GM12878 (cell line): ENCODE measurements at regions of chr12 and their contacts with region 1.

Region 1: DNA sequence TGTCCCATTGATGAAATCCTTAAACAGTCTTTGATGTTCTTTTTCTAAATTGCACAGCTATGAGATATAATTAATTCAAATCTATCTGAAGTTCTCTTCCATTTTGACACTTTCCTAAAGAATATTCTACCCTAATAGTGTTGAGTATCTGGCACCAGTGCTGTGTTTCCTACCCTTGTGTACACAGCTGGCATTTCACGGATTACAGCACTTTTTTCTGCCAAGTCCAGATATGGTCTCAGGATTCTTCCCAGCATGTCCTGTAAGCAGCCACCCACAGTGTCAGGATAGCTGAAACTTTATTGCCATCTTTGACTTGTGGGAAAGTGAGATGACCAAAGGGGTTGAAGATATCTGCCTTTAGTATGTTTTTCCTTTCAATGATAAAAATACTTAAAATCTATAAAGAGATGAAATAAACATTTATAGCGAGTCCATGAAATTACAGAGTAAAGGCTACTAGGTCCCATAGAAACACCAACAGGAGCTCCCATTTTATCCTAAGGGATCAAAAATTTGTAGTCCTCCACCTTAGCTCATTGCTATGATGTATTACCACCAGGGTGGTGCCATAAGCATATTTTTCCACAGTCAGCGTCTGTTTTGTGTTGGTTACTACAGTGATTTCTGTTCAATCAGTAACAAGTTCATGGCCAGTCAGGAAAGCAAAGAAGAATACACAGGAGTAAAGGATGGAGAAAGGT is 96.7 kb downstream of the TRHDE start:
- DNase-seq: no peak
- ATAC-seq: no peak
- H3K4me3 ChIP-seq: no peak overlapping the region
- H3K27ac ChIP-seq: no peak overlapping the region
- H3K4me1 ChIP-seq: no peaks in the 10 kb centered on the region
- H3K27me3 ChIP-seq: no peaks in the 10 kb centered on the region
- CTCF ChIP-seq: no peak
- EP300 ChIP-seq: no peak
- POLR2A ChIP-seq: no peak
- RAD21 ChIP-seq: no peak

Region 2: DNA sequence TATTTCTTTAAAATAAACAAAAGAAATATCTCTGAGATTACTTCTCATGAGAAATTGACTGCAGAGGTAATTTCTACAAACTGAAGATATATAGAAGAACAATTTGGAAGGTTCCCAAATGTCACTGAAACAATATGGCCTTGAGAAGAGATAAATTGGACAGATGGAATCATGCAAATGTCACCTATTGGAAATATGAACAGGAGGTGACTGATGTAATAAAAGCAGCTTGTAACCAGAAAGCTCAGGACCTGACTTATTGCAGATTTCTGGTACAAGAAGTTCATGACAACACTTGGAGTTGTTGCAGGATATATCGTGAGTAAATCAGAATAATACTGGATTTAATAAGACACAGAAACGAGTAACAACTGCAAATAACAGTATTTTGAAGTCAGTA is 190.0 kb before region 1 on chr12:
- CTCF ChIA-PET with region 1: no interaction called
- POLR2A ChIA-PET with region 1: no interaction called
- RAD21 ChIA-PET with region 1: no interaction called
- SMC1A ChIA-PET with region 1: no interaction called
- in situ Hi-C with region 1: no loop called
- intact Hi-C with region 1: no loop called
- DNase-seq: no peak
- ATAC-seq: no peak
- H3K4me3 ChIP-seq: no peak overlapping the region
- H3K27ac ChIP-seq: no peak overlapping the region
- H3K4me1 ChIP-seq: no peaks in the 10 kb centered on the region
- H3K27me3 ChIP-seq: no peaks in the 10 kb centered on the region
- CTCF ChIP-seq: no peak
- EP300 ChIP-seq: no peak
- POLR2A ChIP-seq: no peak
- RAD21 ChIP-seq: no peak

Region 3: GRCh38 chr12:72349491-72349890 is 19.4 kb before region 1 on chr12:
- CTCF ChIA-PET with region 1: no interaction called
- POLR2A ChIA-PET with region 1: no interaction called
- RAD21 ChIA-PET with region 1: interaction called, 3 read pairs
- SMC1A ChIA-PET with region 1: interaction called, 4 read pairs
- in situ Hi-C with region 1: no loop called
- intact Hi-C with region 1: loop called (anchors 1 kb)
- DNase-seq: no peak
- ATAC-seq: no peak
- H3K4me3 ChIP-seq: no peak overlapping the region
- H3K27ac ChIP-seq: no peak overlapping the region
- H3K4me1 ChIP-seq: no peaks in the 10 kb centered on the region
- H3K27me3 ChIP-seq: no peaks in the 10 kb centered on the region
- CTCF ChIP-seq: no peak
- EP300 ChIP-seq: no peak
- POLR2A ChIP-seq: no peak
- RAD21 ChIP-seq: no peak